Naive thymus-derived CD4-positive, alpha-beta T cell (primary cell): ENCODE measurements at regions of chr14 and their contacts with region 1.

Region 1: DNA sequence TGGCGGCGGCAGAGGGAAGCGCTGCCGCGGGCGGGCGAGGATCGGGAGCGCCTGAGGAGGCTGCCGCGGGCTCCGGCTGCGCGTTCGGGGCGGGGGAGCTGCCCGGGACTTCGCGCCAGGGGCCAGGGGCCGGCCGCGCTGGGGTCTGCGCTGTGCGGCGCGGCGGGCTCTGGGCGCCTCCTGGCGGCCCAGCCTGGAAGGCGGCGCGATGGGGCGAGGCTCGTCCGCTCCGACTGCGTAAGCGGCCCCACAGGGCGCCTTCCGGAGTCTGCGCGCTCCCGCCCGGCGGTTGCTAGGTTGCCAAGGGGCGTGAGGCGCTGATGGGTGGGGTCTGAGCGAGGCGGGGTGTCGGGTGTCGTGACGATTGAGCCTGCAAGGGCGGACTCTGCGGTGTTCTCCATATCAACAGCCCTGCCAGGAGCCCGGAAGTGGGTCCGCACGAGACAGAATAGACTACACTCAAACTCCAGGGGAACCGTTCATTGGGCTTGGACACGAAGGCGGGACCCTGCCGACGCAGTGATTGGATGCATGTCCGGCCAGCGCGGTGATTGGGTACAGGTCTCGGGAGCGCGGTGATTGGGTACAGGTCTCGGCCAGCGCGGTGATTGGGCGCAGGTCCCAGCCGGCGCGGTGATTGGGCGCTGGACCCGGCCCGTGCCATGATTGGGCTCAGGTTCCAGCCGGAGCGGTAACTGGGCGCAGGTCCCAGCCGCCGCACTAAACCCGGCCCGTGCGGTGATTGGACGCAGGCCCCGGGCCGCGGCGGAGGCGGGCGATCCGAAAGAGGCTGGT is at the start of gene TEDC1:
- DNase-seq: peak; percentile 96 to 100 (median 100)
- ATAC-seq: peak; percentile 75
- H3K4me3 ChIP-seq: peak within 1 kb of the TSS; percentile 85
- H3K4me3 Mint-ChIP-seq: peak within 1 kb of the TSS; percentile 79 to 95 (median 86)
- H3K27ac ChIP-seq: peak within 1 kb of the TSS; percentile 100
- H3K27ac Mint-ChIP-seq: peak within 1 kb of the TSS; percentile 84 to 99 (median 96)
- H3K4me1 ChIP-seq: peaks cover 16 to 24% of the 10 kb centered on the region in 2 donors
- H3K4me1 Mint-ChIP-seq: peaks cover 5 to 24% (median 19%) of the 10 kb centered on the region in 7 donors
- H3K27me3 ChIP-seq: no peaks in the 10 kb centered on the region
- H3K27me3 Mint-ChIP-seq: no peaks in the 10 kb centered on the region
- total RNA-seq, gene TEDC1: 19.7 to 294 (median 31.3) TPM

Region 2: GRCh38 chr14:104985675-104986525 is 504.9 kb before region 1 on chr14 and contains the start of gene CLBA1:
- CTCF ChIA-PET with region 1: no interaction called
- POLR2A ChIA-PET with region 1: no interaction called
- intact Hi-C with region 1: loop called in 1 of 2 experiments (anchors 2 kb)
- DNase-seq: peak; percentile 81 to 90 (median 89)
- ATAC-seq: peak; percentile 96
- H3K4me3 ChIP-seq: peak within 1 kb of the TSS; percentile 56
- H3K4me3 Mint-ChIP-seq: peak within 1 kb of the TSS; percentile 64 to 86 (median 76)
- H3K27ac ChIP-seq: peak within 1 kb of the TSS; percentile 72
- H3K27ac Mint-ChIP-seq: peak within 1 kb of the TSS in 8 of 9 donors; percentile 74 to 89 (median 86)
- H3K4me1 ChIP-seq: no peaks in the 10 kb centered on the region
- H3K4me1 Mint-ChIP-seq: peaks cover 0 to 9% (median 4%) of the 10 kb centered on the region in 7 donors
- H3K27me3 ChIP-seq: no peaks in the 10 kb centered on the region
- H3K27me3 Mint-ChIP-seq: peaks cover 0 to 5% (median 4%) of the 10 kb centered on the region in 5 donors
- total RNA-seq, gene CLBA1: 0.51 to 2.1 (median 1.3) TPM

Region 3: GRCh38 chr14:105086833-105087307 is 403.9 kb before region 1 on chr14:
- CTCF ChIA-PET with region 1: no interaction called
- POLR2A ChIA-PET with region 1: no interaction called
- intact Hi-C with region 1: loop called in 1 of 2 experiments (anchors 10 kb)
- DNase-seq: peak; percentile 74 to 88 (median 84)
- ATAC-seq: peak; percentile 92
- H3K4me3 ChIP-seq: peak overlapping the region; percentile 63
- H3K4me3 Mint-ChIP-seq: peak overlapping the region; percentile 64 to 83 (median 78)
- H3K27ac ChIP-seq: peak overlapping the region; percentile 55
- H3K27ac Mint-ChIP-seq: peak overlapping the region in 8 of 9 donors; percentile 3 to 84 (median 55)
- H3K4me1 ChIP-seq: peaks cover 4 to 7% of the 10 kb centered on the region in 2 donors
- H3K4me1 Mint-ChIP-seq: peaks cover 8 to 22% (median 13%) of the 10 kb centered on the region in 7 donors
- H3K27me3 ChIP-seq: no peaks in the 10 kb centered on the region
- H3K27me3 Mint-ChIP-seq: peaks cover 0 to 27% (median 0%) of the 10 kb centered on the region in 5 donors

Region 4: GRCh38 chr14:105314287-105315200 is 176.2 kb before region 1 on chr14 and contains the start of gene PACS2:
- CTCF ChIA-PET with region 1: no interaction called
- POLR2A ChIA-PET with region 1: interaction called, 3 read pairs
- intact Hi-C with region 1: loop called in 1 of 2 experiments (anchors 1 kb)
- DNase-seq: peak; percentile 64 to 90 (median 86)
- ATAC-seq: peak; percentile 89
- H3K4me3 ChIP-seq: peak within 1 kb of the TSS; percentile 57
- H3K4me3 Mint-ChIP-seq: peak within 1 kb of the TSS; percentile 80 to 98 (median 89)
- H3K27ac ChIP-seq: peak within 1 kb of the TSS; percentile 68
- H3K27ac Mint-ChIP-seq: peak within 1 kb of the TSS; percentile 74 to 95 (median 89)
- H3K4me1 ChIP-seq: peaks cover 13 to 21% of the 10 kb centered on the region in 2 donors
- H3K4me1 Mint-ChIP-seq: peaks cover 9 to 35% (median 23%) of the 10 kb centered on the region in 7 donors
- H3K27me3 ChIP-seq: no peaks in the 10 kb centered on the region
- H3K27me3 Mint-ChIP-seq: peaks cover 0 to 9% (median 0%) of the 10 kb centered on the region in 5 donors
- total RNA-seq, gene PACS2: 33.9 to 75.4 (median 72.3) TPM

Region 5: GRCh38 chr14:105398044-105398725 is 92.6 kb before region 1 on chr14 and contains the start of gene TEX22:
- CTCF ChIA-PET with region 1: interaction called, 3 read pairs
- POLR2A ChIA-PET with region 1: interaction called, 6 read pairs
- intact Hi-C with region 1: loop called (anchors 1 kb)
- DNase-seq: peak; percentile 75 to 98 (median 84)
- ATAC-seq: peak; percentile 93
- H3K4me3 ChIP-seq: peak within 1 kb of the TSS; percentile 63
- H3K4me3 Mint-ChIP-seq: peak within 1 kb of the TSS; percentile 78 to 95 (median 83)
- H3K27ac ChIP-seq: peak within 1 kb of the TSS; percentile 87
- H3K27ac Mint-ChIP-seq: peak within 1 kb of the TSS; percentile 57 to 95 (median 86)
- H3K4me1 ChIP-seq: peaks cover 20 to 25% of the 10 kb centered on the region in 2 donors
- H3K4me1 Mint-ChIP-seq: peaks cover 6 to 29% (median 18%) of the 10 kb centered on the region in 7 donors
- H3K27me3 ChIP-seq: no peaks in the 10 kb centered on the region
- H3K27me3 Mint-ChIP-seq: no peaks in the 10 kb centered on the region
- total RNA-seq, gene TEX22: 1.4 to 10.5 (median 6.5) TPM

Region 6: GRCh38 chr14:105456736-105457617 is 33.8 kb before region 1 on chr14:
- CTCF ChIA-PET with region 1: interaction called, 11 read pairs
- POLR2A ChIA-PET with region 1: no interaction called
- intact Hi-C with region 1: no loop called
- DNase-seq: no peak
- ATAC-seq: no peak
- H3K4me3 ChIP-seq: no peak overlapping the region
- H3K4me3 Mint-ChIP-seq: no peak overlapping the region
- H3K27ac ChIP-seq: no peak overlapping the region
- H3K27ac Mint-ChIP-seq: no peak overlapping the region
- H3K4me1 ChIP-seq: no peaks in the 10 kb centered on the region
- H3K4me1 Mint-ChIP-seq: peaks cover 0 to 2% (median 0%) of the 10 kb centered on the region in 7 donors
- H3K27me3 ChIP-seq: no peaks in the 10 kb centered on the region
- H3K27me3 Mint-ChIP-seq: no peaks in the 10 kb centered on the region